ENCODE measurements at regions of chr4 and their contacts with region 1.

Region 1: DNA sequence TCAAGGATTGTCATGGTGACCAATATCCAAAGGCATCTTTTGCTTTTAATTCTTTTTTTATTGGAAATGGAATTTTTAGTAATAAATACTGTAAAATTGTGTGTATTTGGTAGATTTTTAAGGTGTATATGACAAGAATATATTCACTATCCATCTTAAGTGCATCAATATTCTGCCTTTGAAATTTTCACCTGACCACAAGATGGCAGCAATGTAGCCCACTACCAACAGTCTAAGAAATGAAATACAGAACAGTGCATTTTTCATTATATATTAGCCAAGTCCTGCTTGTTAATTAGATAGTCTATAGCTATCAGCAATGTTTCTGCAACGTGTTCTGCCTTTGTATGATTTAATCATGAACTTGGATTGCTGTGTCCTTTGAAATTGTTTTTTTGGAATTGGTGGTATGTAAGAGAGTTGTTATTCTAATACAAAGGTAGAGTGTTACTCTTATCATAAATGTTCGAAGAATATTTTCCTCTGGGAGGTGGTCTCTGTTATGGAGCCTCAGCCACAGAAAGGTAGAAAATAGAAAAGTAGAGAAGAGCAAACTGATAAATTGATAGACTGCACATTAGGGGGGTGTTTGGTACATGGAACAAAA is 38.2 kb downstream of the HPGDS start:
- DNase-seq: peak; percentile 63
- H3K4me3 Mint-ChIP-seq: no peak overlapping the region
- H3K27ac Mint-ChIP-seq: no peak overlapping the region
- H3K4me1 Mint-ChIP-seq: no peaks in the 10 kb centered on the region
- H3K27me3 Mint-ChIP-seq: no peaks in the 10 kb centered on the region

Region 2: GRCh38 chr4:94390804-94391410 is 86.4 kb after region 1 on chr4:
- intact Hi-C with region 1: loop called (anchors 1 kb)
- DNase-seq: peak; percentile 70
- H3K4me3 Mint-ChIP-seq: no peak overlapping the region
- H3K27ac Mint-ChIP-seq: no peak overlapping the region
- H3K4me1 Mint-ChIP-seq: no peaks in the 10 kb centered on the region
- H3K27me3 Mint-ChIP-seq: peaks cover 3% of the 10 kb centered on the region

Region 3: DNA sequence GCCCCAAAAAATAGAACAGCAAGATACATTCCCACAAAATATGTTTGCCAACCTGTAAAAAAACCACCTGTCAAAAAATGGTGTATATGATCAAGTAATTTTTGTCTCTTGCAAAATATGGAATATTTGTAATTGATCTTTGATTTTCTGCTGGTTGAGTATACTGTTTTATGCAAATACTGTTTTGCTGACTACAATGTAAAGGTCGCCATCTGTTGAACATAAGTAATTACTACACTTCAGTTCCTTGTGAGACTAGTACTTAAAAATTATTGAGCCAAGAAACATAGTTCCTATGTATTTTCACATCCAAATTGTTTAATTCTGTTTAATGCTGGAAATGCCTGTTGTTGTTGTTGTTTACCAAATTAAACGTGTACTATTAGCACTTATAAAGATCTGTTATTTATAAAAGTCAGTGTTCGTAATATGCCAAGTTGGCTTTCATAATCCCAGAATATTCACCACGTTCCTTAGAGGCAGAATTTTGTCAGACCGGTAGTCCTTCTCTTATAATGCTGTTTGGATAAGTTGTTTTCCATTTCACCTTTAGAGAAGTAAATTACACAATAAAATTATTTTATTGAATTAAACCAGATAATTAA is 291.5 kb after region 1 on chr4:
- intact Hi-C with region 1: loop called (anchors 2 kb)
- DNase-seq: no peak
- H3K4me3 Mint-ChIP-seq: no peak overlapping the region
- H3K27ac Mint-ChIP-seq: no peak overlapping the region
- H3K4me1 Mint-ChIP-seq: no peaks in the 10 kb centered on the region
- H3K27me3 Mint-ChIP-seq: no peaks in the 10 kb centered on the region

Measured in activated CD4-positive, alpha-beta T cell treated with anti-CD3 and anti-CD28 coated beads, Interleukin-2, amount 10 ng/mL, durations not matched to agents 24 days and 14 days (primary cell).